AG04449 (cell line): ENCODE measurements at regions of chr7 and their contacts with region 1.

Region 1: GRCh38 chr7:13981070-13981469 is 8.4 kb downstream of the ETV1 start:
- DNase-seq: peak; percentile 80
- H3K4me3 ChIP-seq: no peak overlapping the region
- CTCF ChIP-seq: no peak

Region 2: GRCh38 chr7:13990984-13991790 is 10.1 kb after region 1 on chr7:
- CTCF ChIA-PET with region 1: interaction called, 32 read pairs
- POLR2A ChIA-PET with region 1: interaction called, 3 read pairs
- DNase-seq: peak; percentile 79
- H3K4me3 ChIP-seq: peak overlapping the region; percentile 82
- CTCF ChIP-seq: no peak